OCI-LY7 (cell line): ENCODE measurements at regions of chr12 and their contacts with region 1.

Region 1: GRCh38 chr12:53025250-53025649 is 19.0 kb downstream of the EIF4B start:
- DNase-seq: no peak
- H3K4me3 ChIP-seq: no peak overlapping the region
- H3K27ac ChIP-seq: no peak overlapping the region
- H3K4me1 ChIP-seq: no peaks in the 10 kb centered on the region
- CTCF ChIP-seq: no peak

Region 2: DNA sequence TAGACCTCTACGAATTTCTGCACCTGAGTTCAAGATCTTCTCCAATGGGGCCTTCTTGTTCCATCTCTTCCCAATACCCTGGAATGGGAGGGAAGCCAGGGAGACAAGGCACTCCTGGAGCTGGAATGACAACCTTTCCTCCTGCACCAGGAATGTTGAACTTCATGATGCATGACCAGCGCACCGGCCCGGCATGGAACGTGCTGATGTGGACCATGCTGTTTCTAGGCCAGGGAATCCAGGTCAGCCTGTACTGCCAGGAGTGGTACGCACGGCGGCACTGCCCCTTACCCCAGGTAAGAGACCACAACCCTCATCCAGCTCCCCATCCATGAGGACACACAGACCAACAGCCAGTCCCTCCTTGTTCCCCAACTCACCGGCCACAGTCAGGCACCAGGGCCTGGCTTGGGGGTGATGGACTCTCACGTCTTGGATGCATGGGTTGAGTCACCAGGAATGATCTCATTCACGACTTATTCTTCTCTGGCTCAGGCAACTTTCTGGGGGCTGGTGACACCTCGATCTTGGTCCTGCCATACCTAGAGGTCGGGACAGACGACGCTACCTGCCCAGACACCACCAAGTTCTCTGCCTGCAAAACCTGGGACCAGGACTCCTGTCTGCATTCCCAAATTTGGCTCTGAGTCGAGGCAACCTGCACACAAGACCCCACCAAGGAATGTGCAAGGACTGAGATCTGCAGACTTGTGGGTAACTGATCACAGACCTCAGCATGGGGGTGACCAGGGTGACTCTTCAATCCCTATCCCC is 98.5 kb after region 1 on chr12:
- CTCF ChIA-PET with region 1: no interaction called
- POLR2A ChIA-PET with region 1: no interaction called
- intact Hi-C with region 1: no loop called
- DNase-seq: no peak
- H3K4me3 ChIP-seq: no peak overlapping the region
- H3K27ac ChIP-seq: no peak overlapping the region
- H3K4me1 ChIP-seq: no peaks in the 10 kb centered on the region
- CTCF ChIP-seq: no peak

Region 3: GRCh38 chr12:53811606-53812005 is 786.4 kb after region 1 on chr12:
- CTCF ChIA-PET with region 1: no interaction called
- POLR2A ChIA-PET with region 1: interaction called, 10 read pairs
- intact Hi-C with region 1: no loop called
- DNase-seq: no peak
- H3K4me3 ChIP-seq: no peak overlapping the region
- H3K27ac ChIP-seq: no peak overlapping the region
- H3K4me1 ChIP-seq: peaks cover 14% of the 10 kb centered on the region
- CTCF ChIP-seq: no peak